B cell (primary cell): ENCODE measurements at regions of chr14 and their contacts with region 1.

Region 1: GRCh38 chr14:71753126-71753830 is 179.0 kb upstream of the RGS6 start:
- DNase-seq: peak; percentile 78
- ATAC-seq: peak; percentile 78
- H3K4me3 ChIP-seq: no peak overlapping the region
- H3K4me3 Mint-ChIP-seq: no peak overlapping the region
- H3K27ac ChIP-seq: no peak overlapping the region
- H3K27ac Mint-ChIP-seq: no peak overlapping the region
- H3K4me1 ChIP-seq: peaks cover 3 to 4% of the 10 kb centered on the region in 2 donors
- H3K4me1 Mint-ChIP-seq: no peaks in the 10 kb centered on the region
- H3K27me3 ChIP-seq: peaks cover 0 to 5% (median 0%) of the 10 kb centered on the region in 4 experiments
- H3K27me3 Mint-ChIP-seq: peaks cover 6% of the 10 kb centered on the region
- CTCF ChIP-seq: peak; percentile 93

Region 2: GRCh38 chr14:71050204-71050823 is 703.0 kb before region 1 on chr14:
- CTCF ChIA-PET with region 1: interaction called, 9 read pairs
- POLR2A ChIA-PET with region 1: no interaction called
- intact Hi-C with region 1: loop called (anchors 2 kb)
- DNase-seq: no peak
- ATAC-seq: no peak
- H3K4me3 ChIP-seq: no peak overlapping the region
- H3K4me3 Mint-ChIP-seq: no peak overlapping the region
- H3K27ac ChIP-seq: no peak overlapping the region
- H3K27ac Mint-ChIP-seq: no peak overlapping the region
- H3K4me1 ChIP-seq: no peaks in the 10 kb centered on the region
- H3K4me1 Mint-ChIP-seq: peaks cover 2% of the 10 kb centered on the region
- H3K27me3 ChIP-seq: no peaks in the 10 kb centered on the region
- H3K27me3 Mint-ChIP-seq: no peaks in the 10 kb centered on the region
- CTCF ChIP-seq: peak; percentile 78

Region 3: GRCh38 chr14:71103662-71104484 is 649.4 kb before region 1 on chr14:
- CTCF ChIA-PET with region 1: interaction called, 111 read pairs
- POLR2A ChIA-PET with region 1: no interaction called
- intact Hi-C with region 1: loop called (anchors 1 kb)
- DNase-seq: peak; percentile 70
- ATAC-seq: peak; percentile 49
- H3K4me3 ChIP-seq: no peak overlapping the region
- H3K4me3 Mint-ChIP-seq: no peak overlapping the region
- H3K27ac ChIP-seq: no peak overlapping the region
- H3K27ac Mint-ChIP-seq: no peak overlapping the region
- H3K4me1 ChIP-seq: no peaks in the 10 kb centered on the region
- H3K4me1 Mint-ChIP-seq: peaks cover 2% of the 10 kb centered on the region
- H3K27me3 ChIP-seq: no peaks in the 10 kb centered on the region
- H3K27me3 Mint-ChIP-seq: no peaks in the 10 kb centered on the region
- CTCF ChIP-seq: peak; percentile 91

Region 4: DNA sequence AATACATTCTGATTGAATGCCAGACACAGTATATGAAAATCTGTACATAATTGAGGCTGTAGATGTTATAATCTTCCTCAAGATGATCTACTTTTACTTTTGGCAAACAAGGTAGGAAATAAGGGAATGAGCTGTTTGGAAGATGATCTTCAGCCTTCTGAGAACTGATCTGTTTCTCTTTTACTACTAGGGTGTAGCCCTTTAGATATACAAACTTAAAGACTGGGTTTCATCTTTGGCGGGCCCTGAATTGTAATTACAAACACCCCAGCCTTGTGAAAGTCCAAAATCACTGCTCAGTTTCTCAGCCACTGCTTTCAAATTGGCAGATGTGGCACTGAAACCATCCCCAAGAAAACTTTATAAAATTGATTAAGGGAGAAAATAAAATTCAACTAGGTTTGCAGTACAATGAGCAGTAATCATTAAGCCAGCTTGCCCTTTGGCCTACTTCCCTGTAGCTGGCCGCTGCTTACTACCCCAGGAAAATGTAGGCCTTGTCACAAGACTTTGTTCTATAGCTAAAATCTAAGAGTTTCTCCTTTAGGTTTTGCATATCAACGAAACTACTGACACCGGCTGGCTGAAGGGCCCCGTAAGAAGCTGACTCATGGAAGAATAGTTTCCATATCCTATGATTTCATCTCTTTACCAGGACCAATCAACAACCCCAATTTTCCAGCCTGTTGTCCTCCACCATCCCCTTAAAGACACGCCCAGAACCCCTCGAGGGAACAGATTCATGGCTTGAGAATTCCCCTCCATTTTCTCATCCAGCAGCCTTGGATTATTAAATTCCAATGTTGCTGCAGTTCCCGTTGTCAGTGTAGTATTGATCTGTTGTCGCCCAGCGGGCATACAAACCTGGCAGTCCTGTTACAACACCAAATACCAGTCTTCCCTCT is 635.2 kb before region 1 on chr14:
- CTCF ChIA-PET with region 1: interaction called, 14 read pairs
- POLR2A ChIA-PET with region 1: no interaction called
- intact Hi-C with region 1: no loop called
- DNase-seq: no peak
- ATAC-seq: peak; percentile 37
- H3K4me3 ChIP-seq: no peak overlapping the region
- H3K4me3 Mint-ChIP-seq: no peak overlapping the region
- H3K27ac ChIP-seq: peak overlapping the region in 1 of 2 donors; percentile 78
- H3K27ac Mint-ChIP-seq: peak overlapping the region; percentile 78
- H3K4me1 ChIP-seq: peaks cover 22 to 24% of the 10 kb centered on the region in 2 donors
- H3K4me1 Mint-ChIP-seq: peaks cover 35% of the 10 kb centered on the region
- H3K27me3 ChIP-seq: no peaks in the 10 kb centered on the region
- H3K27me3 Mint-ChIP-seq: no peaks in the 10 kb centered on the region
- CTCF ChIP-seq: no peak

Region 5: DNA sequence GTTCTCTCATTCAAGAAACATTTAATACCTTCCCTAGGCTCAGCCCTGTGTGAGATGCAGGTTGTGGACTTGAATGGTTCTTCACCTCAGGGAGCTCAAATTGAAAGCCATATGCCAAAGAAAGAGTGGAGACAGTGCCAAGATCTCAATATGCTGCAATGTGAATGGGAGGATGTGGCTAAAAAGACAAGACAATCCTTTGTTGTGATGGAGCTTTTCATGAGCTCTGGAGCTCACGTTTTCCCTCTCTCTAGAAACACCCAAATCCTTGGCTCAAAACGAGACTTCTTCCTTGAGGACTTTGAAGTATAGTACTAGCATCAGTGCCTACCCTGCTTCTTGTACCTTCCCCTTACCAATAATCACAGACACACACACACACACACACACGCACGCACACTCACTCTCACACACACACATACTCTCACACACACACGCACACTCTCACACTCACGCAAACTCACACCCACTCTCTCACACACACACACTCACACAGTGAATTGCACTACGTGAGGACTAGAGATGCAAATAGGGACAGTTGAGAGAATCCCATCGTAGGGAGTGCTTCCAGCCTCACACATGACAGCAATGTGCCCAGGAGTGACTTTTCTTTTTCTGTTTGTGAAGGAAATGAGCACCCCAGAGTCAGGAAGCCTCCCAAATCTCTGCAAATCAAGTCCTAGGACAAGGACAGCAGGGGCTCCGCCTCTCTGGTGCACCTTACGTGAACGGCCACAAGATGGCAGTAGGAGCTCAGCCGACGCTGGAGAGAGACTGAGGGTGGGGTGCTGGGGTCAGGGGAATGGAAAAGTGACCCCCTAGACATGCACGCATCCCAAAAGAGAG is 614.6 kb before region 1 on chr14:
- CTCF ChIA-PET with region 1: interaction called, 310 read pairs
- POLR2A ChIA-PET with region 1: no interaction called
- intact Hi-C with region 1: loop called (anchors 1 kb)
- DNase-seq: peak; percentile 77
- ATAC-seq: peak; percentile 72
- H3K4me3 ChIP-seq: no peak overlapping the region
- H3K4me3 Mint-ChIP-seq: no peak overlapping the region
- H3K27ac ChIP-seq: no peak overlapping the region
- H3K27ac Mint-ChIP-seq: no peak overlapping the region
- H3K4me1 ChIP-seq: peaks cover 15 to 23% of the 10 kb centered on the region in 2 donors
- H3K4me1 Mint-ChIP-seq: peaks cover 27% of the 10 kb centered on the region
- H3K27me3 ChIP-seq: no peaks in the 10 kb centered on the region
- H3K27me3 Mint-ChIP-seq: no peaks in the 10 kb centered on the region
- CTCF ChIP-seq: peak; percentile 97

Region 6: GRCh38 chr14:71739273-71739937 is 13.9 kb before region 1 on chr14:
- CTCF ChIA-PET with region 1: interaction called, 14 read pairs
- POLR2A ChIA-PET with region 1: no interaction called
- intact Hi-C with region 1: no loop called
- DNase-seq: no peak
- ATAC-seq: no peak
- H3K4me3 ChIP-seq: no peak overlapping the region
- H3K4me3 Mint-ChIP-seq: no peak overlapping the region
- H3K27ac ChIP-seq: no peak overlapping the region
- H3K27ac Mint-ChIP-seq: peak overlapping the region; percentile 53
- H3K4me1 ChIP-seq: no peaks in the 10 kb centered on the region
- H3K4me1 Mint-ChIP-seq: no peaks in the 10 kb centered on the region
- H3K27me3 ChIP-seq: no peaks in the 10 kb centered on the region
- H3K27me3 Mint-ChIP-seq: no peaks in the 10 kb centered on the region
- CTCF ChIP-seq: no peak